ENCODE measurements at regions of chr19 and their contacts with region 1.

Region 1: DNA sequence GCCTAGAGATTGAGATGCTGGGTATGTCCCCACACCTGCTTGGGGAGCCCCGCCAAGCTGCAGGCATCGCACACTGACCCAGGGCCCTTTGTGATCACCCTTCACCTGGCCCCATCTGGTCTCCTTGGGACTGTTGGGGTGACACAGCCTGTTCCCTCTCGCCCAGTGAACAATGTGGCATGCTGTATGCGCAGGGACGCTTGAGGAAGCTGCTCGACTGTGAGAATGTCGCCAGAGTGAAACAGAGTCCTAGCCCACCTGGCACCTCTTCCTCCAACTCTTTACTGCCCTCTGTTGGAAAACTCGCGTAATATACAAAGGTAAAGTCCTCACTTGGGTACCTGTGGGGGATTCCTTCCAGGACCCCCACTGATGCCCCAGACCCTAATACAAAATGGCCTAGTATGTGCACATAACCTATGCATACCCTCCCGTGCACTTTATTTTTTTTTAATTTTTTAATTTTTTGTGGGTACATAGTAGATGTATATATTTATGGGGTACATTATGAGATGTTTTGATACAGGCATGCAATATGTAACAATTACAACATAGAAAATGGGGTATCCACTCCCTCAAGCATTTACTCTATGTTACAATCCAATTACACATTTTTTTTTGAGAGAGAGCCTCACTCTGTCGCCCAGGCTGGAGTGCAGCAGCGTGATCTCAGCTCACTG is 9.0 kb downstream of the BLOC1S3 start:
- DNase-seq: no peak
- H3K4me3 Mint-ChIP-seq: no peak overlapping the region
- H3K27ac Mint-ChIP-seq: no peak overlapping the region
- H3K4me1 Mint-ChIP-seq: peaks cover 2% of the 10 kb centered on the region
- H3K27me3 Mint-ChIP-seq: no peaks in the 10 kb centered on the region

Region 2: DNA sequence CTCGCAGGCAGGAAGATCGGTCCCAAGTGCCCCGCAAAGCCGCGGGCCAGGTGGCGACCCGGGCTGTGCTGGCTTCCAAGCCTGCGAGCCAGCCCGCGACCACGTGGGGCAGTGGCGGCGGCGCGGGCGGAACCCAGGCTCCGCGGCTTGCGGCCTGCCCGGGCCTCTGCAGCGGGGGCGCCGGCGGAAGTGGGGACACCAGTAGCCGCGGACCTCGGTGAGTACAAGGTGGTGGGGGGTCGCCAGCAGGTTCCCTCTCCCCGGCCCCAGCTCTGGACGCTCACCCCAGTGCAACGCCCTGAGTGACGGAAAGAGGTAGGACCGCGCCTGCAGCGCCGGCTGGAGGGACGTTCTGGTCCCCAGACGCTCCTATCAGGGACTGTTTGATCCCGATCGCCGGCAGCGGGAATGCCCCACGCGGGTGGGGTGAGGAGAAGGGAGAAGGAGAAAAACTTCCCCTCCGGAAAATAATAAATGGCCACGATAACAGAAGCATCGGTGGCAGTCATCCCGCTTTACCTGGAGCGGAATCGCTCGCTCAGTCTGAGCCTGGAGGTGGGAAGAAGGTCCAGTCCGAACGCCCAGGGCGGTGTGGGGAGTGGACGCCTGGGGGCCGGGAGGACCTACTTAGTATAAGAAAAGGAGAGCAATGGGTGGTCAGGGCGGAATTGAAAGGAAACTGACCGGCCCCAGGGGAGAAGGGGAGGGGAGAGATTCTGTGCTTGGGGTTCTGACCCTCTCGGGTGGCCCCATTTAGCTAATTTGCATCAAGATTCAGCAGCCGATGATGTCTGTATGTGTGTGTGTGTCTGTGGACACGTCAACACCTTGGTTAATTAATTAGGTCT is 108.3 kb before region 1 on chr19 and contains the start of gene GEMIN7:
- intact Hi-C with region 1: no loop called
- DNase-seq: peak; percentile 75
- H3K4me3 Mint-ChIP-seq: peak within 1 kb of the TSS; percentile 99
- H3K27ac Mint-ChIP-seq: peak within 1 kb of the TSS; percentile 89
- H3K4me1 Mint-ChIP-seq: peaks cover 33% of the 10 kb centered on the region
- H3K27me3 Mint-ChIP-seq: no peaks in the 10 kb centered on the region
- total RNA-seq, gene GEMIN7: 44.9 and 49.4 TPM in 2 replicates

Region 3: GRCh38 chr19:45245334-45245787 is 57.8 kb after region 1 on chr19 and contains the start of gene EXOC3L2:
- intact Hi-C with region 1: loop called (anchors 5 kb)
- DNase-seq: no peak
- H3K4me3 Mint-ChIP-seq: no peak within 1 kb of the TSS
- H3K27ac Mint-ChIP-seq: no peak within 1 kb of the TSS
- H3K4me1 Mint-ChIP-seq: no peaks in the 10 kb centered on the region
- H3K27me3 Mint-ChIP-seq: peaks cover 9% of the 10 kb centered on the region
- total RNA-seq, gene EXOC3L2: not detected in 2 replicates